Stomach (tissue), 19 donors: ENCODE measurements at regions of chr5 and their contacts with region 1.

Region 1: DNA sequence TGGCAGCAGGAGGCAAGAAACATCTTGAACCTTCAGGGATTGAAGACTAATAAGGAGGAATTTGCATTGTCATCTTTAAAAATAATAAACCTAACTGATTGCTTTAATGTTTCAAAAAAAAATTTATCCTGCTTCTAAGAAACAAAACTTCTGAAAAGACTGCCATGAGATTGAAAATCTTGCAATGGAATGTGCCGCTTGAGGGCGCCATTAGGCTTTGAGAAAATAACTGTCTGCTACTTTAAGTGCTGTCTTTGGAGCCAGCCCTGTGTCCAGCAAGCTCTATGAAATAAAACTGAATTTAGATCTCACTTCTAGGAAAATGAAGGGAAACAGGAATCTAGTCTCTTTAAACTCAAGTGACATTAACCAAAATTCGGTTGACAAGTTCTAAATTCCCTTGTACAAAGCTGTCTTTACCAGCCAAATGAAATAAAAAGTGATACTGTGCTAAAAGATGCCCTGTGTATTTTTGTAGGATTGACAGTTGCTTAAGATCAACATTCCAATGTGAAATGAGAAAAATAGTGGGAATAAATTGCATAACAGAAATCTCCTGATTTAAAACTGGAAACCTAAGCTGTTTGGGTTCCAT is 79.4 kb downstream of the ESM1 start:
- DNase-seq: peak; percentile 85 to 86
- H3K4me3 ChIP-seq: no peak overlapping the region
- H3K27ac ChIP-seq: no peak overlapping the region
- H3K4me1 ChIP-seq: peaks cover 0 to 11% (median 9%) of the 10 kb centered on the region in 4 donors
- H3K27me3 ChIP-seq: no peaks in the 10 kb centered on the region
- CTCF ChIP-seq: peak in 4 of 7 experiments; percentile 50 to 59 (median 54)
- EP300 ChIP-seq: no peak
- POLR2A ChIP-seq: no peak

Region 2: DNA sequence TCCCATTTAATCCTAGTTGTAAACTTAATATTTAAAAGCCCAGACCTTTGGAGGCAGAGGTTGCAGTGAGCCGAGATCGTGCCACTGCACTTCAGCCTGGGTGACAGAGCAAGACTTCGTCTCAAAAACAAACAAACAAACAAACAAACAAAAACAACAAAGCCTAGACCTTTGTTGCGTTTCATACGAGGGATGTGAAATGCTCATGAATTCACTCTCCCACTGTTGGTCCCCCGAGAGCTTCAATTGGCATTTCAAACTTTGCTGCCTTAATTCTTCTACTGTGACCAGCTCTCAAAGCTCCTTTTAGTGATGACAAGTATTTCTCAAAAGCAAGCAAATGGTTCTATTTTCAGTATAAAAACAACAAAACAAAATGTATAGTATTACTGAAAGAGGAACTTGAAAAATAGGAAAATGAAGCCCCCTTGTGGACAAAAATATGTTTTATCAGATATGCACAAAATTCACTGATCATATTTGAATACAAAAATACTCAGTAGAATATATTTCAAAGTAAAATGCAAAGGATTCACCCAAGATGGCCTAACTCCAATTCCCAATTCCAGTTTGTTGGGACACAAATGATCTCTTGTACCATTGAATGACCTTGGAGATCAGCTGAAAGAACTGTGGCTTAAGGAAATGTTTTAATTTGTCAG is 61.0 kb before region 1 on chr5:
- intact Hi-C with region 1: no loop called
- DNase-seq: peak in 1 of 2 donors; percentile 77
- H3K4me3 ChIP-seq: peak overlapping the region; percentile 1 to 23 (median 13)
- H3K27ac ChIP-seq: peak overlapping the region in 2 of 5 donors; percentile 3 to 9
- H3K4me1 ChIP-seq: peaks cover 0 to 11% (median 0%) of the 10 kb centered on the region in 4 donors
- H3K27me3 ChIP-seq: no peaks in the 10 kb centered on the region
- CTCF ChIP-seq: peak in 5 of 7 experiments; percentile 26 to 62 (median 56)
- EP300 ChIP-seq: no peak
- POLR2A ChIP-seq: no peak

Region 3: GRCh38 chr5:55146543-55147151 is 240.6 kb after region 1 on chr5:
- intact Hi-C with region 1: loop called (anchors 10 kb)
- DNase-seq: peak; percentile 82 to 93
- H3K4me3 ChIP-seq: no peak overlapping the region
- H3K27ac ChIP-seq: no peak overlapping the region
- H3K4me1 ChIP-seq: peaks cover 0 to 8% (median 5%) of the 10 kb centered on the region in 4 donors
- H3K27me3 ChIP-seq: peaks cover 0 to 14% (median 0%) of the 10 kb centered on the region in 3 donors
- CTCF ChIP-seq: peak in 5 of 7 experiments; percentile 63 to 86 (median 82)
- EP300 ChIP-seq: no peak
- POLR2A ChIP-seq: no peak